Activated CD8-positive, alpha-beta T cell treated with anti-CD3 and anti-CD28 coated beads for 36 hours (primary cell): ENCODE measurements at regions of chr15 and their contacts with region 1.

Region 1: GRCh38 chr15:48975472-48976419 is 12.0 kb upstream of the SHC4 start:
- DNase-seq: peak; percentile 84
- ATAC-seq: peak; percentile 100
- H3K4me3 Mint-ChIP-seq: peak overlapping the region; percentile 46
- H3K27ac Mint-ChIP-seq: no peak overlapping the region
- H3K4me1 Mint-ChIP-seq: peaks cover 2% of the 10 kb centered on the region
- H3K27me3 Mint-ChIP-seq: peaks cover 21% of the 10 kb centered on the region
- CTCF ChIP-seq: peak; percentile 97

Region 2: GRCh38 chr15:48877630-48878595 is 97.8 kb before region 1 on chr15 and contains the start of gene EID1:
- CTCF ChIA-PET with region 1: interaction called, 25 read pairs
- POLR2A ChIA-PET with region 1: no interaction called
- intact Hi-C with region 1: no loop called
- DNase-seq: peak; percentile 96
- ATAC-seq: peak; percentile 94
- H3K4me3 Mint-ChIP-seq: peak within 1 kb of the TSS; percentile 99
- H3K27ac Mint-ChIP-seq: peak within 1 kb of the TSS; percentile 99
- H3K4me1 Mint-ChIP-seq: peaks cover 33% of the 10 kb centered on the region
- H3K27me3 Mint-ChIP-seq: peaks cover 5% of the 10 kb centered on the region
- CTCF ChIP-seq: no peak
- total RNA-seq, gene EID1: 78.3 to 80.5 TPM

Region 3: GRCh38 chr15:48946088-48946839 is 29.5 kb before region 1 on chr15:
- CTCF ChIA-PET with region 1: interaction called, 18 read pairs
- POLR2A ChIA-PET with region 1: no interaction called
- intact Hi-C with region 1: no loop called
- DNase-seq: no peak
- ATAC-seq: peak; percentile 91
- H3K4me3 Mint-ChIP-seq: no peak overlapping the region
- H3K27ac Mint-ChIP-seq: no peak overlapping the region
- H3K4me1 Mint-ChIP-seq: peaks cover 15% of the 10 kb centered on the region
- H3K27me3 Mint-ChIP-seq: peaks cover 19% of the 10 kb centered on the region
- CTCF ChIP-seq: no peak

Region 4: DNA sequence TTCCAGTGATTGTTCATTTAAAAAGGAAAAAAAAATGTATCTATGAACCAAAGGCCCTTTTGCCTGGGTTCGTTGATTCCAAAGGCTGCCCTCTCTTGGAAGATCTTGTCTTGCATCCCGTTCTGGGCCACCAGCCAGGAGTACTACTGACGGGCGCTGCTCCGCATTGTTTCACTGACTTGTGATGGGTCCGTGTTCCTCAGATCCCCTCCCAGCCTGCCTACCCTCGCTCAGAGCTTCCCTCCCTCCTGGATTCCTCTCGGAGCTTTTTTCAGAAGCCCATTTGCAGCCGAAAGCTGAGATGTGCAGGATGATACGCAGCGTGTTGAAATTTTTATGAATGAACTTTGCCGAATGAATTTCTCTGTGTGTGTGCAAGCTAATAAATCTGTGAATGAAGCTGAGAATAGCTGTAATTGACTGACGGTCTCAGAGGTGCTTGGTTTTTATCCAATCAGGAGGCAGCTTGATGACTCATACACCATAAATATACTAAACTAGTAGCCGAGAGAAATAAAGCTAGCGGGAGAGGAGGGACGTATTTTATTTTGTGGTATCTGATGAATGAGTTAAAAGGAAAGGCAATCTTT is 12.1 kb before region 1 on chr15 and contains the start of gene SHC4:
- CTCF ChIA-PET with region 1: interaction called, 54 read pairs
- POLR2A ChIA-PET with region 1: interaction called, 4 read pairs
- intact Hi-C with region 1: no loop called
- DNase-seq: peak; percentile 35
- ATAC-seq: peak; percentile 52
- H3K4me3 Mint-ChIP-seq: peak within 1 kb of the TSS; percentile 78
- H3K27ac Mint-ChIP-seq: peak within 1 kb of the TSS; percentile 65
- H3K4me1 Mint-ChIP-seq: peaks cover 33% of the 10 kb centered on the region
- H3K27me3 Mint-ChIP-seq: peaks cover 31% of the 10 kb centered on the region
- CTCF ChIP-seq: no peak
- total RNA-seq, gene SHC4: 2.5 TPM

Region 5: DNA sequence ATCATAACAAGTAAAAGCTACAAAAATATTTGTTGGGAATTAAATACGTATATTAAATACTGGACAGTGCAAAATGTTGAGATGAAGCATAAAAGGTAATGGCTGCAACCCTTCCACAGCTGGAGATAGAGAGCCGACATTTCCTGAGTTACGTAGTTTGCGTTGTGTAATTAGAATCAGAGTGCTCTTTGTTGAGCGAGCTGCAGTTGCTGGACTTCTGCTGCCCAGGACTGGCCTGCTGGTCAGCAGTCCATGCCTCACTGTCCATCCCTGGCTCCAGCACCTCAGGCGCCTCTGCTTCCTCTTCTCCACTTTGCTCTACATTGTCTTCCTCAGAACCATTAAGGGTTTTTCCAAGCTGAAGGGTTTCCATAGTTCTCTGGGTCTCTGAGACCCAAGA is 16.4 kb after region 1 on chr15:
- CTCF ChIA-PET with region 1: interaction called, 28 read pairs
- POLR2A ChIA-PET with region 1: no interaction called
- intact Hi-C with region 1: no loop called
- DNase-seq: no peak
- ATAC-seq: no peak
- H3K4me3 Mint-ChIP-seq: no peak overlapping the region
- H3K27ac Mint-ChIP-seq: no peak overlapping the region
- H3K4me1 Mint-ChIP-seq: no peaks in the 10 kb centered on the region
- H3K27me3 Mint-ChIP-seq: no peaks in the 10 kb centered on the region
- CTCF ChIP-seq: no peak